PC-3 (cell line): ENCODE measurements at regions of chr12 and their contacts with region 1.

Region 1: DNA sequence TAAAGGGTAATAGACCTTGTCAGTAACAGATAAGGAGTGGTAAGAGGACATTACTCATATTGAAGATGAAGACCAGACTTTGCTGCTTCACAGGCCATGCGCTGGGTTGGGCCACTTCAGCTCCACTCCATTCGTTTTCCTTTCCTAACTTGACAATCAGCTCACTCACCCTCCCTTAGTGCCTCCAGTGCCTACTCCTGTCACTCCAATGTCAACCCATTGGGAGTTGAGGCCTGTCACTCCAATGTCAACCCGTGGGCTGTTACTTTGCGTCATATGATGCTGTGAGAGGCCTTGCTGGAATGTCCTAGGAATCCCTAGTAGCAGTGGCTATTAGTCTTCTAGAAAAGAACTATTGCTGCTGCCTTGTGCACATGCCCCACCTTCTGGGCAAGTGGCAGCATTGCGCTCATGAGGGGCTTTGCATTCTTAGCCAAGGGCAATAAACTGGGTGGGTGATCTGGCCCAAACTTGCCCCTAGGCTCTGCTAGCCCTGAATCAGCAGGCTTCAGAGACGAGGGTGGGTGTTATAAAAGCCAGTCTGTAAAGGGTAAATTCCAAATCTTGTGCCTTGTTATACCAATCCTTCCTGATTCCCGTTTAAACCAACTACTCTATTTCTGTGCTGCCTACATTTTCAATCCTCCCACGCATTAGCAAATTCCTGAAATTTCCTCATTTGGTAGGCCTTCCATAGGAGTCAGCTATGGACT is 36.1 kb downstream of the BAZ2A start:
- DNase-seq: peak; percentile 78
- ATAC-seq: peak; percentile 65
- H3K4me3 ChIP-seq: no peak overlapping the region
- H3K27ac ChIP-seq: no peak overlapping the region
- H3K4me1 ChIP-seq: no peaks in the 10 kb centered on the region
- H3K27me3 ChIP-seq: no peaks in the 10 kb centered on the region
- CTCF ChIP-seq: peak; percentile 92

Region 2: DNA sequence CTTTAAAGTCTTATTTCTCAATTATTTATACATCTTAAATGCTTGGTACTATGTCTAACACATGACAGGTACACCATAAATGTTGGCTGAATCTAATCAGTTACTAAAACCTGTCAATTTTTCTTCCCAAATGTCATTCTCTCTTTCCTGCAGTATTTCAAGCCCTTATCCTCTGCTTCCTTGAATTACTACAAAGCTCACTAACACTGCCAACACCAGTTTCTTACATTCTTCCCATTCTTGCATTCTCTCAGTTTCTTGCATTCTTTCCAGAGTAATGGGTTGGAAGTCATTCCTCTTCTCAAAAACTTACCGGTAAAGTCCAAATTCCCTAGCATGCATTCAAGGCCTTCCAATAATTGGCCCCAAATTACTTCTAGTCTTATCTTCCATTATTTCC is 395.2 kb before region 1 on chr12:
- CTCF ChIA-PET with region 1: no interaction called
- POLR2A ChIA-PET with region 1: no interaction called
- intact Hi-C with region 1: no loop called
- DNase-seq: no peak
- ATAC-seq: no peak
- H3K4me3 ChIP-seq: no peak overlapping the region
- H3K27ac ChIP-seq: no peak overlapping the region
- H3K4me1 ChIP-seq: no peaks in the 10 kb centered on the region
- H3K27me3 ChIP-seq: no peaks in the 10 kb centered on the region
- CTCF ChIP-seq: no peak

Region 3: GRCh38 chr12:56490360-56490759 is 103.7 kb before region 1 on chr12:
- CTCF ChIA-PET with region 1: no interaction called
- POLR2A ChIA-PET with region 1: no interaction called
- intact Hi-C with region 1: loop called (anchors 5 kb)
- DNase-seq: no peak
- ATAC-seq: no peak
- H3K4me3 ChIP-seq: no peak overlapping the region
- H3K27ac ChIP-seq: no peak overlapping the region
- H3K4me1 ChIP-seq: peaks cover 5% of the 10 kb centered on the region; the same call in 1 of the 2 replicates
- H3K27me3 ChIP-seq: no peaks in the 10 kb centered on the region
- CTCF ChIP-seq: no peak

Region 4: GRCh38 chr12:56628671-56629458 is 34.8 kb after region 1 on chr12:
- CTCF ChIA-PET with region 1: no interaction called
- POLR2A ChIA-PET with region 1: interaction called, 17 read pairs
- intact Hi-C with region 1: no loop called
- DNase-seq: peak; percentile 30
- ATAC-seq: no peak; the same call in 1 of the 2 replicates
- H3K4me3 ChIP-seq: peak overlapping the region; percentile 99
- H3K27ac ChIP-seq: peak overlapping the region; percentile 53
- H3K4me1 ChIP-seq: peaks cover 33% of the 10 kb centered on the region
- H3K27me3 ChIP-seq: no peaks in the 10 kb centered on the region
- CTCF ChIP-seq: no peak